ENCODE measurements at regions of chr2 and their contacts with region 1.

Region 1: DNA sequence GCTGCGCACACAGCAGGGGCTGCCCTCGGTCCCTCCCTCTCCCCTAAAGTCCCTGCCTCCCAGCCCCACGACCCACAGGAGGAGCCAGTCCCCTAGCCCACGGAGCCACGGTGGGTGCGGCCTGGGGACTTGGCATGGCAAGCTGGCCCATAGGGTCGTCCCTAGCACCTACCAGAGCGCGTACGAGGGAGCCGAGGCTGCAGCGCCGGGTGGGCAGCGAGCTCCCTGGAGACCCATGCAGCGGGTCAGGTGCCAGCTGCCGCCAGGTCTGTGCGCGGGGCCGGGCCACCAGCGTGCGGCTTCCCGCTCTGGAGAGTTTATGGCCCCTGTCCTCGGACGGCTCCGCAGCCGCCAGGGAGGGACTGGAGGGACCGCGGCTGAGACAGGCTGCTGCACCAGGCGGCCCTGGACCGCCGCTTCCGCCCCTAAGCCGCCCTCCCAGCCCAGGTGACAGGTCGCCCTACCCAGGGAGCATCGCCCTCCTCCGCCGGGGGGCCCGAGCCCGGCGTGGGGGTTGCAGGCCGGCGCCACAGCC is 273.6 kb downstream of the CCDC74A start:
- DNase-seq: peak in 1 of 4 experiments; percentile 6
- ATAC-seq: no peak
- H3K4me3 ChIP-seq: no peak overlapping the region
- H3K27ac ChIP-seq: no peak overlapping the region
- H3K4me1 ChIP-seq: peaks cover 0 to 16% of the 10 kb centered on the region in 2 experiments; a peak in 2 of 5 replicates
- H3K27me3 ChIP-seq: no peaks in the 10 kb centered on the region
- CTCF ChIP-seq: no peak
- EP300 ChIP-seq: no peak
- POLR2A ChIP-seq: no peak
- RAD21 ChIP-seq: no peak

Region 2: DNA sequence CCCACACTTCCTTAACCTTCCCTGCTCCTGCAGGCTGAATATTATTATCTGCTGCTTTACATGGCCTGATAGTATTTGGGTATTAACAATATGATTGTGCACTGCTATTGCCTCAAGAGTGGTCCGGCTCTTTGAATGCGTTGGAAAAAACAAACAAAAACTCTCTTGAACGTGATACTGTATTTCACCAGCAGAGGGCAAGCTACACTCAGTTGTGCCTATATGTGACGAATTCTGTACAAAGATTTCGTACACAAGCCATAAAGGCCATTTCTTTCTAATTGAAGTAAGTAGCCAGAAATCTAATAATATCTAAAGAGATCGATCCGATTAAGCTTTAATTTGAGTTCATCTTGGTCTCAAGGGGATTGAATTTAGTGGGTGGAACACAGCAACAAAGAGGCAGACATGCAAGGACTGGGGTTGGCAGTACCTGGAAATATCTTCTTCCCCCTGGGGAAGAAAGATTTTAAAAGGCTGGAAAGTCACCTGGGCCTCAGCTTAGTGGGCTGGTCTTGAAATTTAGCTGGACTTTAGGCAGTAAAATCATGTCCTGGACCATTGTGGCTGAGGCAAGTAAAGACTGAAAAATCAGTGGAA is 388.0 kb before region 1 on chr2:
- CTCF ChIA-PET with region 1: interaction called, 4 read pairs
- POLR2A ChIA-PET with region 1: no interaction called
- in situ Hi-C with region 1: loop called (anchors 25 kb)
- intact Hi-C with region 1: loop called (anchors 5 kb)
- DNase-seq: peak; percentile 47 to 71 (median 49)
- ATAC-seq: peak; percentile 91
- H3K4me3 ChIP-seq: no peak overlapping the region
- H3K27ac ChIP-seq: no peak overlapping the region
- H3K4me1 ChIP-seq: no peaks in the 10 kb centered on the region
- H3K27me3 ChIP-seq: peaks cover 16 to 27% of the 10 kb centered on the region in 2 experiments; a peak in 4 of 5 replicates
- CTCF ChIP-seq: peak; percentile 65 to 89 (median 78); a peak in 5 of 6 replicates
- EP300 ChIP-seq: no peak
- POLR2A ChIP-seq: no peak
- RAD21 ChIP-seq: peak; percentile 89 to 96

Measured in K562 (cell line).